AG04449 (cell line): ENCODE measurements at regions of chr14 and their contacts with region 1.

Region 1: GRCh38 chr14:24806061-24806678 is 172.2 kb upstream of the GZMB start:
- DNase-seq: peak; percentile 5
- H3K4me3 ChIP-seq: no peak overlapping the region
- CTCF ChIP-seq: peak; percentile 88

Region 2: GRCh38 chr14:24879661-24880386 is 73.7 kb after region 1 on chr14:
- CTCF ChIA-PET with region 1: no interaction called
- POLR2A ChIA-PET with region 1: no interaction called
- DNase-seq: no peak
- H3K4me3 ChIP-seq: no peak overlapping the region
- CTCF ChIP-seq: no peak

Region 3: GRCh38 chr14:25132732-25133422 is 326.7 kb after region 1 on chr14:
- CTCF ChIA-PET with region 1: interaction called, 49 read pairs
- POLR2A ChIA-PET with region 1: no interaction called
- DNase-seq: no peak
- H3K4me3 ChIP-seq: no peak overlapping the region
- CTCF ChIP-seq: peak; percentile 74

Region 4: GRCh38 chr14:25150934-25151790 is 345.0 kb after region 1 on chr14:
- CTCF ChIA-PET with region 1: interaction called, 13 read pairs
- POLR2A ChIA-PET with region 1: no interaction called
- DNase-seq: peak; percentile 34
- H3K4me3 ChIP-seq: no peak overlapping the region
- CTCF ChIP-seq: peak; percentile 56